Activated T-helper 1 cell treated with anti-CD3 and anti-CD28 coated beads, Interleukin-12 subunit alpha, Interleukin-12 subunit beta, Interleukin-2, Interleukin-4 antibody, amounts not matched to agents 30 ng/mL and 10 ng/mL and 1 ng/mL, durations not matched to agents 14 hours and 24 hours and 36 hours (primary cell): ENCODE measurements at regions of chr2 and their contacts with region 1.

Region 1: GRCh38 chr2:19868705-19869580 is 32.8 kb downstream of the TTC32 start:
- DNase-seq: peak; percentile 47
- H3K4me3 Mint-ChIP-seq: peak overlapping the region; percentile 89
- H3K27ac Mint-ChIP-seq: peak overlapping the region; percentile 86
- H3K4me1 Mint-ChIP-seq: peaks cover 36% of the 10 kb centered on the region
- H3K27me3 Mint-ChIP-seq: peaks cover 5% of the 10 kb centered on the region

Region 2: DNA sequence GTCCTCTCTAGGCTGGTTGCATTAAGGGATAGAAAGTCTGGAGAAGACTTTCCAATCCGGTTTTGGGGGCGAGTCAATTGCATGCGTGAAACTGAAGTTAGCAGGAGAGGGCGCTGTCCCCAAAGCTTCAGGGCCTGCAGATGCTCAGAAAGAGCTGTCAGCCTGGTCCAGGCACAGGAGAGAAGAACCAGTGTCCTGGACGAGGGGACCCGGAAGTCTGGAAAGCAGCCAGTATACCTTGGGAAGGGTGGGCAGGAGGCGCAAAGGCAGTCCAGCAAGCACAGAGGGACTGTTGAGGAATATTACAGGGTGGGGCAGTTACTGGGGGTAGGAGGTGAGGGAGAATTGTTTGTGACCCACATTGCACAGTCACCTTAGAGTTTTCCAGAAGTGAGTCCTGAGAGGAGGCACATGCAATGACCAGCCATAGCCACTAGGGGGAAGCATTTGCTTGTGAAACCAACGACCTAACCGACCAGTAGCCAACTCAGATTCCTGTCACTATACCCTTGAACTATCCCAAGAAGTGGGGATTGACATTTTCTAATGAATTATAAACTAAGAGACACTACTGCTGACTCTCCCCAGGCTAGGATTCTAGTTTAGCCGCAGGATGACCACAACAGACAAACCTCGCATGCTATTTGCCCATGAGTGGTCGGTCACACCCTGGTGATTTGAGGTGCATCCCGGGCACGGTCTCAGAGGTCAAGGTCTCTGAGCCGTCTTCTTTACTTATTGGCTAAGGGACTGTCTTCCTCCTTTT is 1481.3 kb before region 1 on chr2:
- intact Hi-C with region 1: loop called (anchors 2 kb)
- DNase-seq: peak; percentile 27
- H3K4me3 Mint-ChIP-seq: no peak overlapping the region
- H3K27ac Mint-ChIP-seq: no peak overlapping the region
- H3K4me1 Mint-ChIP-seq: no peaks in the 10 kb centered on the region
- H3K27me3 Mint-ChIP-seq: peaks cover 2% of the 10 kb centered on the region

Region 3: DNA sequence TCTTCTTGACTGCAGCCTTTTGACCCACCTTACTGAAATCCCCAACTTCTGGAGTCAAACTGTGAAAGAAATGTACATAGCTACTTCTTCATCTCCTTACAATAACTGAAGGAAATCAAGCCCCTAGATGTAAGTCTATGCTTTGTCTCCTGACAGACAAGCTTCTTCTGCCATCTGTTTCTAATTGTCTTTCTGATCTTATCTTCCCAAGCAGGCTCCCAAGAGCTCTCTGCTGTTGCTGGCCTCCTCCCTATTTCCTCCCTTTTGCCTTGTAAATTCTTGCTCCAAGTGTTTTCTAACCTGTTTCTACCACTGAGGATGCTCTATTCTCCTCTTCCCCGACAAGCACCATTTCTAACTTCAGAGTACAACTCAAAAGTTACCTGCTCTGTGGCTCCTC is 433.1 kb before region 1 on chr2:
- intact Hi-C with region 1: no loop called
- DNase-seq: no peak
- H3K4me3 Mint-ChIP-seq: no peak overlapping the region
- H3K27ac Mint-ChIP-seq: no peak overlapping the region
- H3K4me1 Mint-ChIP-seq: no peaks in the 10 kb centered on the region
- H3K27me3 Mint-ChIP-seq: peaks cover 5% of the 10 kb centered on the region

Region 4: DNA sequence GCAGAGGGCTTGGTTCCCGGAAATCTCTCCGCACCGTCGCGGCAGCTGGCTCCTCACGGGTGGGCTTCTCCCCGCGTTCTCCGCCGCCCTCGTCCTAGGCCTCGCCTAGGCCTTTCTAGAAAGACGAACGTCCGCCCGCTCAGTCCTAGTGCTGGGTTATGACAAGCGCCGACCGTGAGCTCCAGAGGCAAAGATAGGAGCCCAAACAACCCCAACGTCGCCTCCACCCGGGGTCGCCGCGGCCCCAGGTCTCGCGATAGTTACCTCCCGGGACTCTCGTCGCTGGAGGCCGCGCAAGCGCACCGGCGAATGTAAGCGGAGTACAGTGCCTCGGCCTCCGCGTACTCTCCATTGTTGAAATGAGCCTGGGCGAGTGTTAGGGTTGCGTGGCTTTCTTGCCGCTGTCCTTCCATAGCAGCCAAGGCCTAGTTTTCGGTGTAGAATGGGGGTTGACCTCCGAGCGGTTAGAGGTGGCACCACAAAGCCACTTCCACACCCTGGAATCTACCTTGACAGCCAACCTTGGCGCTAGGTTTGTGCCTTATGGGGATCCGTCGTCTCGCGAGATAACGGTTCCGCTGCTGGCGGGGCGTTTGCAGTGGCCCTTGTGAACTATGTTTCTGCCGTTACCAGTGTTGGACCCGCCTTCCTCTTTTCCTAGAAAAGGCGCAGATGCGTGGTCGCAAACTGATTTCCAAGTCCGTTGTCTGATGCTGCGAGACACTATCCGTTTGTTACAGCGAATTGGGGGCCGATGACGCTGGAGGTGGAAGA is 32.7 kb after region 1 on chr2 and contains the start of gene TTC32:
- intact Hi-C with region 1: loop called (anchors 2 kb)
- DNase-seq: peak; percentile 89
- H3K4me3 Mint-ChIP-seq: peak within 1 kb of the TSS; percentile 91
- H3K27ac Mint-ChIP-seq: peak within 1 kb of the TSS; percentile 94
- H3K4me1 Mint-ChIP-seq: peaks cover 48% of the 10 kb centered on the region
- H3K27me3 Mint-ChIP-seq: peaks cover 9% of the 10 kb centered on the region
- total RNA-seq, gene TTC32: 14.0 and 15.7 TPM in 2 replicates